ENCODE measurements at regions of chr21 and their contacts with region 1.

Region 1: DNA sequence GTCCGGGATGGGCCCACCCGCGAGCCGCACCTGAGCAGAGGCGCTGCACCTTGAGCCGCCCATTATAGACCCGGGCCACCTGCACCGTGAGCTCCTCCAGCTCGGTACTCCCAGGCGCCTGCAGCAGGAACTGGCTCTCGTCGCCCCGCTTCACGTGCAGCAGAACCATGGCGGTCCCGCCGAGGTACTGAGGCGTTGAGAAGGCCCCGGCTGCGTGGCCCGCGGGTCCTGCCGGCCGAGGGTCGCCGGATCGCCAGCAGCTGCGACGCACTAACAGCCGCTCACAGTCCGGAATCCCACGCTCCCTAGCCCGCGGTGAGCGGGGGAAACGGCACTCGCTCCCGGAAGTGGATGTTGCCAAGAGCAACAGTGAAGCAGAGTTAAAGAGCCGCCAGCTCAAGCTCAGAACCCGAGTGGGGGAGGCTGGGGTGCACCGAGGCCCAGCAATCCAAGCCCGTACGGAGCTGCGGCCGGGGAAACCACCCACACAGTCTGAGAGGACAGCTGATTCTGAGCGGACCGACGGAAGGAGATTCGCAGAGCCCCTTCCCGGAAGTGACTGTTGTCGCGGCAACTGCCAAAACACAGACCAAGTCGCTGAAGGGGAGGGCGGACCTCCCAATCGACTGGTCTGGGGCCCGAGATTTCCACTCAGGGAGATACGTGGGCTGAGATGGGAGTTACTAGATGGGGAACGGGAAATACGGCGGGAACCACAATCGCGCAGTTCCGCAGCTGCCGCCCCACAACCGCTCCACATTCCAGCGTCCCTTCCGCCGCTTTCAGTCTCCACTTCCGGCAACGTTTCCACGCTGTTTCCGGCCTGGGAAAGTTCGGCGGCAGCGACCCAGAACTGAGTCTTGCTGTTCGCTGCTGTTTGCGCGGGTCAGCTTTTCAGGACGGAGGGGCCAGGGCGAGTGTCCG is at the start of gene CFAP298:
- DNase-seq: peak; percentile 90 to 97 (median 92)
- H3K4me3 ChIP-seq: peak within 1 kb of the TSS; percentile 95 to 99
- H3K4me3 Mint-ChIP-seq: peak within 1 kb of the TSS; percentile 91 to 98 (median 96)
- H3K27ac ChIP-seq: peak within 1 kb of the TSS; percentile 86
- H3K27ac Mint-ChIP-seq: peak within 1 kb of the TSS; percentile 98 to 99 (median 99)
- H3K4me1 ChIP-seq: peaks cover 12% of the 10 kb centered on the region
- H3K4me1 Mint-ChIP-seq: peaks cover 8 to 32% (median 20%) of the 10 kb centered on the region in 4 donors
- H3K27me3 ChIP-seq: no peaks in the 10 kb centered on the region
- H3K27me3 Mint-ChIP-seq: peaks cover 1 to 2% of the 10 kb centered on the region in 2 donors
- total RNA-seq, gene CFAP298: 29.4 to 39.1 TPM

Region 2: GRCh38 chr21:32412162-32413014 is 199.9 kb before region 1 on chr21 and contains the start of gene EVA1C:
- CTCF ChIA-PET with region 1: no interaction called
- POLR2A ChIA-PET with region 1: interaction called, 32 read pairs
- intact Hi-C with region 1: loop called (anchors 1 kb)
- DNase-seq: peak; percentile 81 to 87 (median 85)
- H3K4me3 ChIP-seq: peak within 1 kb of the TSS; percentile 40 to 83
- H3K4me3 Mint-ChIP-seq: peak within 1 kb of the TSS; percentile 94 to 98 (median 96)
- H3K27ac ChIP-seq: peak within 1 kb of the TSS; percentile 86
- H3K27ac Mint-ChIP-seq: peak within 1 kb of the TSS; percentile 95 to 99 (median 97)
- H3K4me1 ChIP-seq: peaks cover 34% of the 10 kb centered on the region
- H3K4me1 Mint-ChIP-seq: peaks cover 32 to 71% (median 43%) of the 10 kb centered on the region in 4 donors
- H3K27me3 ChIP-seq: no peaks in the 10 kb centered on the region
- H3K27me3 Mint-ChIP-seq: no peaks in the 10 kb centered on the region
- total RNA-seq, gene EVA1C: 17.1 to 17.2 TPM

Measured in CD4-positive, alpha-beta memory T cell (primary cell).